Activated CD4-positive, alpha-beta memory T cell treated with anti-CD3 and anti-CD28 coated beads for 36 hours (primary cell): ENCODE measurements at regions of chr10 and their contacts with region 1.

Region 1: DNA sequence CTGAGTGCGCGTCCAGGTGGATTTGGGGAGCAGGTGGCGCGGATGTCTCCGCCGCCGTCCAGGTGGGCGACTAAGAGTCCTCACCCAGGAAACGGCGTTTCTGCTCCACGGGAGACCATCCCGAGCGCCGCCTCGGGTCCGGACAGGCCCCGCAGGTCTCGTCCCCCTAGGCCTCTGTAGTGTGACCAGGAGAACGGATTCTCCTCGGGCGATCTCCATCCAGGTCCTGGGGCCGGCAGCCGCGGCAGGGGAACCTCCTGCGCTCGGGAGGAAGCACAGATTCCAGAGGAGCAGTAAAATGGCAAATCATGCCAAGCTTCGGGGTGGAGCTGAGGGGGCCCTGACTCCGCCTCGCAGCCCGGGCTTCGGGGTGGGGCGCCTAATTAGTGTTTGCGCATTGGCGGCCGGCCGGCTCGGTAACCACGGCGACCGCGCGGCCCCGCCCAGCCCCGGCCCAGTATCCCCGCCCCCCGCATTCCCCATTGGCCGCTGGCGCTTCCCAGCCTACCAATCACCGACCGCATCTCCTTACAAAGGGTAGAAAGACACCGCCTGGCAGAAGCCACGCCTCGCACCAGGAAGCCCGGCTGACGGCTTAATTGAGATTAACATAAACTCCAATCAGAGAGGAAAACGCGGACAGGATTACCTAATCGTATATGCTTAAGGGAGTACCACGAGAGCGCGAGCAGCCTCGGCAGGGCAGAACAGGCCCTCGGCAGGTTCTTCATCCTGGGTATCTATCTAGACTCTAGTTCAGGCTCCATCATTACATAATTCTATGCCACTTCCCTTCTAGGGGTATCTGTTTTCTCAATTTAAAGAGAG is 168.6 kb downstream of the ARHGAP12 start:
- DNase-seq: peak; percentile 97
- H3K4me3 Mint-ChIP-seq: peak overlapping the region; percentile 96
- H3K27ac Mint-ChIP-seq: peak overlapping the region; percentile 91
- H3K4me1 Mint-ChIP-seq: peaks cover 10% of the 10 kb centered on the region
- H3K27me3 Mint-ChIP-seq: no peaks in the 10 kb centered on the region

Region 2: DNA sequence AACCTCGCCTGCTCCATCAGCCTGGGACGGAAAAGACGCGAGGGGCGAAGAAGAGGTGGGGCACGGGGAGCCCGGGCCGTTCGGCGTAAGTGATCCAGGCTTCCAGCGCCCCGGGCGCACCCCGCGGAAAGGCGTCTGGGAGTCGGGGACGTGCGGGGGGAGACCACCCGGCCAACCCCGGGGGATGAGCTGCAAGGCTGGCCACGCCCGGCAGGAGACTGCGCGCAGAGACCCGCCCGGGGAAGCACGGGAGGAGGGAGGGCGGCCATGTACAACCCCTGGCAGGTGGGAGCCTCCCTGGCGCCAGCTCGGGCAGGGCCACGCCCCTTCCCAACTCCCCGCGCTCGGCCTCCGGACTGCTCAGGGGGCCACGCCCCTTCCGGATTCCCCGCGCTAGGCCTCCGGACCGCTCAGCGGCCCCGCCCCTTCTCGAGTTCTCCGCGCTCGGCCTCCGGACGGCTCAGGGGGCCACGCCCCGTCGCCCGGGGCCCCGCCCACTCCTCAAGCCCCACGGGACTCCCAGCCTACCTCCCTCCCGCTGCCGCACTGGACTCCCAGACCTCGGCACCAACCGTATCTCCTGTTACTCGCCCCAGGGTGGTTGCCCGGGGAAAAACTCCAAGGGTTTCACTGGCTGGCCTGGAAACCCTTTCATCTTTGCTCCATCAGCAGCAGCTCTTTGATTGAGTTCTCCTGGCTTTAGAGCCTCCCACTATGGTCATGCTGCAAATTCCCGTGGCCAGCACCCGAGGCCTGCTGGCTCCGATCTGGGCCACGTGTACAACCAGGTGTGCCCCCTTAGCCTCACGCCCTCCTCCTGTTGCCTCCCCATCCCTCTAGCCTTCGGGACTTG is 156.6 kb before region 1 on chr10:
- CTCF ChIA-PET with region 1: no interaction called
- POLR2A ChIA-PET with region 1: no interaction called
- intact Hi-C with region 1: loop called (anchors 1 kb)
- DNase-seq: peak; percentile 93
- H3K4me3 Mint-ChIP-seq: peak overlapping the region; percentile 77
- H3K27ac Mint-ChIP-seq: no peak overlapping the region
- H3K4me1 Mint-ChIP-seq: peaks cover 25% of the 10 kb centered on the region
- H3K27me3 Mint-ChIP-seq: peaks cover 1% of the 10 kb centered on the region

Region 3: DNA sequence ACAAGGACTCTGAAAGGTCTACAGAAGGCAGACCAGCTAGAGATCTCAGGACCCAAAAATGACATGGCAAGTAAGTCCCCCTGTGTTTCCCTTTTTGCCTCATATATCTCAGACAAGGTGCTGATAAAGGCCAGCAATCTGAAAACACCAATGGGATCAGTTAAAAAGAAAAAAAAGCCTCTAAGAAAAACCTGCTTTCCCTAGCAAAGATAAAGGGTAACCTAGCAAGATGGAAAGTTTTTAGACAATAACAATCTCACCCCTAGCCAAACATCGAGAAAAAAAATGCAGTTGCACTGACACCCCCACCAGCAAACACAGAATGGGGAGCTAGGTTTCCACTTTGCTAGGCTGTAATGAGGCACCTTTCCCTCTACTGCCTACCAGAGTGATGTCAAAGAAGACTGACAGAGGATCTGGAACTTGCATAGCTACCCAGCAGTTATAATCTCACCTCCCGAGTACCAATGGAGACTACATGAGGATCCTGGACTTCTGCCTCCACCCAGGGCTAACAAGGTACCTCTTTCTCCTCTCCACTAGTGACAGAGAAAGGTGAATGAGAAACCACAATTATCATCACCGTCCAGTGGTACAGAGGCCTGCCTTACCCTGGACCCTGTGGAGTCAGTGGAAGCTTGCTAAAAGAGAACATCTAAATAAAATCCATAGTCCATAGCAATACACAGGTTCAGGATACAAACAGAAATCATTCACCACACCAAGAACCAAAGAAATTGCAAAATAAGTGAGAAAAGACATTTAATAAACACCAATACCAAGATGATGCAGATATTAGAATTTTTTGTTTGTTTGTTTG is 72.1 kb before region 1 on chr10:
- CTCF ChIA-PET with region 1: no interaction called
- POLR2A ChIA-PET with region 1: no interaction called
- intact Hi-C with region 1: loop called (anchors 5 kb)
- DNase-seq: no peak
- H3K4me3 Mint-ChIP-seq: no peak overlapping the region
- H3K27ac Mint-ChIP-seq: no peak overlapping the region
- H3K4me1 Mint-ChIP-seq: no peaks in the 10 kb centered on the region
- H3K27me3 Mint-ChIP-seq: no peaks in the 10 kb centered on the region